CD8-positive, alpha-beta memory T cell (primary cell): ENCODE measurements at regions of chr12 and their contacts with region 1.

Region 1: DNA sequence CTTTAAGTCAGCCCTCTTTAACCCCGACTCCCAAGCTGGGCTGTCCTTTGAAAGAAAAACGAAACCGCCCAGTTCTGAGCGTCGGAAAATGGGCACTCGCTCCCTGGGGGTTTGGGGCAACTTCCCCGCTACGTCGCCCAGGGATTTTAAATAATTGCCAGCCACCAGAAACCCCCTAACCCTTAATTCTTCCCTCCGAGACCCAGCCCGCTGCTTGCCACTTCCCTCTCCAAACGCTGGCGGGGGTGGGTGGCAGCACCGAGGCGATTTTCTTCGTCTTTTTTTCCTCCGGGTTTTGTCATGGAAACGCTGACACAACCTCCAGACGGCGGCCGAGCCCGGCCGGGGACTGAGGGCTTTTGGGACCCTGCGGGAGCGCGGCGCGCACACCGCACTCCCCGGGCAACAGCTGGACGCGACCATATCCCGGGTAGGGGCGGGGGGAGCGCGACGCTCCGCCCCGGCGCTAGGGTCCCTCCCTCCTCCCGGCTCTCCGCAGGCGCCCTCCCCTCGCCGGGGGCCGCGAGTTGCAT is at the start of gene CHST11:
- DNase-seq: peak; percentile 62 to 82 (median 67)
- H3K4me3 ChIP-seq: peak within 1 kb of the TSS; percentile 94
- H3K4me3 Mint-ChIP-seq: peak within 1 kb of the TSS; percentile 92 to 100 (median 97)
- H3K27ac ChIP-seq: peak within 1 kb of the TSS; percentile 83
- H3K27ac Mint-ChIP-seq: peak within 1 kb of the TSS; percentile 86 to 99 (median 96)
- H3K4me1 ChIP-seq: peaks cover 27% of the 10 kb centered on the region
- H3K4me1 Mint-ChIP-seq: peaks cover 36 to 49% (median 44%) of the 10 kb centered on the region in 3 donors
- H3K27me3 ChIP-seq: no peaks in the 10 kb centered on the region
- H3K27me3 Mint-ChIP-seq: no peaks in the 10 kb centered on the region
- total RNA-seq, gene CHST11: 47.8 to 51.5 TPM

Region 2: DNA sequence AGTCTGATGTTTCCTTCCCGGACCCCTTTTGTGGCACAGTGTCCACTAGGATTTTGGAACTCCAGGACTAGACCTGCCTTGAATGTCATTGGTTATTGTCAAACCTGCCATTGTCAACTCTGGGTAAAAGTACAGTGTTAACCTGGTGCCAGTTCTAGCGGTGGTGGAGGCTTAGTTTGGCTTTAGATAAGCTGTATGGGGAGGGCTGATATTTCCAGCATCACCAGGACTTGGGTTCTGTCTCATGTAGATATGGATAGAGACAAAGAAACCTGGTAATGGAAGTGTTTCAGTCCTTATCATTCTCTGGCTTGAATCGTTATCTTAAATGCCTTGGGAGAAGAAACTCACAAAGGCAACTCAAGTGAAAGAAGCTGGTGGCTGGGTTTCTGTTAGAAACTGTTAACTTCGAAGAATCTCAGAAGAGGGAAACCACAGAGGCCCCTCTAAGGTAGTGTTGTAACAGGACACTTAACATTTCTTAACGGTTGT is 10.9 kb after region 1 on chr12:
- CTCF ChIA-PET with region 1: interaction called, 14 read pairs
- POLR2A ChIA-PET with region 1: interaction called, 18 read pairs
- DNase-seq: no peak
- H3K4me3 ChIP-seq: peak overlapping the region; percentile 9
- H3K4me3 Mint-ChIP-seq: peak overlapping the region; percentile 27 to 79 (median 65)
- H3K27ac ChIP-seq: peak overlapping the region; percentile 12
- H3K27ac Mint-ChIP-seq: peak overlapping the region; percentile 48 to 93 (median 84)
- H3K4me1 ChIP-seq: peaks cover 96% of the 10 kb centered on the region
- H3K4me1 Mint-ChIP-seq: peaks cover 90 to 100% (median 98%) of the 10 kb centered on the region in 3 donors
- H3K27me3 ChIP-seq: no peaks in the 10 kb centered on the region
- H3K27me3 Mint-ChIP-seq: no peaks in the 10 kb centered on the region

Region 3: GRCh38 chr12:104478396-104479122 is 22.1 kb after region 1 on chr12:
- CTCF ChIA-PET with region 1: interaction called, 23 read pairs
- POLR2A ChIA-PET with region 1: interaction called, 18 read pairs
- DNase-seq: peak in 3 of 5 donors; percentile 17 to 68 (median 62)
- H3K4me3 ChIP-seq: peak overlapping the region; percentile 32
- H3K4me3 Mint-ChIP-seq: peak overlapping the region; percentile 67 to 95 (median 91)
- H3K27ac ChIP-seq: peak overlapping the region; percentile 43
- H3K27ac Mint-ChIP-seq: peak overlapping the region; percentile 84 to 99 (median 96)
- H3K4me1 ChIP-seq: peaks cover 75% of the 10 kb centered on the region
- H3K4me1 Mint-ChIP-seq: peaks cover 83 to 92% (median 91%) of the 10 kb centered on the region in 3 donors
- H3K27me3 ChIP-seq: no peaks in the 10 kb centered on the region
- H3K27me3 Mint-ChIP-seq: no peaks in the 10 kb centered on the region

Region 4: GRCh38 chr12:104494137-104494792 is 37.8 kb after region 1 on chr12:
- CTCF ChIA-PET with region 1: interaction called, 5 read pairs
- POLR2A ChIA-PET with region 1: interaction called, 11 read pairs
- DNase-seq: peak in 4 of 5 donors; percentile 19 to 60 (median 29)
- H3K4me3 ChIP-seq: peak overlapping the region; percentile 27
- H3K4me3 Mint-ChIP-seq: peak overlapping the region; percentile 62 to 84 (median 81)
- H3K27ac ChIP-seq: peak overlapping the region; percentile 52
- H3K27ac Mint-ChIP-seq: peak overlapping the region; percentile 80 to 98 (median 94)
- H3K4me1 ChIP-seq: peaks cover 84% of the 10 kb centered on the region
- H3K4me1 Mint-ChIP-seq: peaks cover 84 to 96% (median 96%) of the 10 kb centered on the region in 3 donors
- H3K27me3 ChIP-seq: no peaks in the 10 kb centered on the region
- H3K27me3 Mint-ChIP-seq: no peaks in the 10 kb centered on the region

Region 5: GRCh38 chr12:104569346-104570173 is 113.1 kb after region 1 on chr12:
- CTCF ChIA-PET with region 1: interaction called, 13 read pairs
- POLR2A ChIA-PET with region 1: interaction called, 10 read pairs
- DNase-seq: peak; percentile 40 to 82 (median 52)
- H3K4me3 ChIP-seq: no peak overlapping the region
- H3K4me3 Mint-ChIP-seq: peak overlapping the region; percentile 55 to 80 (median 64)
- H3K27ac ChIP-seq: no peak overlapping the region
- H3K27ac Mint-ChIP-seq: peak overlapping the region; percentile 60 to 94 (median 87)
- H3K4me1 ChIP-seq: peaks cover 49% of the 10 kb centered on the region
- H3K4me1 Mint-ChIP-seq: peaks cover 65 to 78% (median 67%) of the 10 kb centered on the region in 3 donors
- H3K27me3 ChIP-seq: no peaks in the 10 kb centered on the region
- H3K27me3 Mint-ChIP-seq: no peaks in the 10 kb centered on the region